WTC11 (cell line): ENCODE measurements at regions of chr12 and their contacts with region 1.

Region 1: GRCh38 chr12:93306636-93307035 is 71.1 kb upstream of the NUDT4 start:
- DNase-seq: no peak
- ATAC-seq: no peak
- H3K4me3 Mint-ChIP-seq: no peak overlapping the region
- H3K27ac Mint-ChIP-seq: no peak overlapping the region
- H3K4me1 Mint-ChIP-seq: no peaks in the 10 kb centered on the region
- H3K27me3 Mint-ChIP-seq: no peaks in the 10 kb centered on the region; the same call in 1 of the 2 replicates
- CTCF ChIP-seq: no peak

Region 2: DNA sequence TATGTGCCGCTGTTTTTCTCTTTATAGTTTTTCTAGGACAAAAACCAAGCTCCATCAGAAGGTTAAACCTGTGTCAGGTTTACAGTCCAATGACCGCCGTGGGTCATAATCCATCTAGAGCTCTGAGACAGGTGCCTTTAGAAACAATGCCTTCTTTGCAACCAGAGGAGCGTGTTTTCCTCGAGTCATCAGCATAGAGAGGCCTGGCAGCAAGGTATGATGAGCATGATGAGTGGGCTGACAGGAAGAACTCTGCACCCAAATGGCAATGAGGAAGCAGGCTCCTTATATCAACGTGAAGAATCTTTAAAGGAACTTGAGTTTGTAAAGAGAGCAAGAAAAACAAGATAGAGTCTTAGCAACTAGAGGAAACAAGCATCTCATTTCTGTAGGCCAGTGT is 10.6 kb after region 1 on chr12:
- CTCF ChIA-PET with region 1: no interaction called
- POLR2A ChIA-PET with region 1: interaction called, 14 read pairs
- DNase-seq: no peak
- ATAC-seq: no peak
- H3K4me3 Mint-ChIP-seq: no peak overlapping the region
- H3K27ac Mint-ChIP-seq: no peak overlapping the region
- H3K4me1 Mint-ChIP-seq: 0 out of 2 replicates have a peak, but pooled peaks cover 4% of the 10 kb centered on the region
- H3K27me3 Mint-ChIP-seq: no peaks in the 10 kb centered on the region
- CTCF ChIP-seq: no peak

Region 3: DNA sequence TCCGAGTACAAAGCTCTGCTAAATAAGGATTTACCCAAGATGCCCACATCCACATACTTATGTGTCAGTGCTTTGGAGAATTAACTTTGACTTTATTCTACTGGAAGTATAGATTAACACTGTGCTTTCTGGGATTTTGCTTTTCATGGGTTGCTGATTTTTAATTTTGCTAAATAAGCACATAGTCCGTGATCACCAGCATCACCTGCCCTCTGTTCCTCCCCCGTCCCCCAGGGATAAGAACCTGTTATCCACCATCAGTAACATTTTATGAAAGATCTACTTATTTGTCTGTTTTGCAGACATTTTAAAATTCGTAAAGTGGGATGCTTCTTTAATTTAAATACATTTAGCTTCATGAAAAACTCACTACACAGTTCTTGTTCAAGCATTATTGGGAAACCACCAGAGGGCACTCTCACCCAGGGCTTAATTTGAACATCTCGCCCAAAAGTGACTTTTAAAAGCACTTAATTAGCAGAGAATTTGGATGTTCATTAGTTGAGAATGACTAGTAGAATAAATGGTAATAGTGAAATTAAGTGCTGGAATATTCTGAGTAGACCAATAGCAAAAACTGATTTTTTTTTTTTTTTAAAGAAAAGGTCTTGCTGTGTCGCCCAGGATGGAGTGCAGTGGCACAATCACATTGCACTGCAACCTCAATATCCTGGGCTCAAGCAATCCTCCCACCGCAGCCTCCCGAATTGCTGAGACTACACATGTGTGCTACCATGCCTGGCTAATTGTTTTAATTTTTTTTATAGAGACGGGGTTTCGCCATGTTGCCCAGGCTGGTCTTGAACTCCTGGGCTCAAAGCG is 196.4 kb after region 1 on chr12:
- CTCF ChIA-PET with region 1: no interaction called
- POLR2A ChIA-PET with region 1: no interaction called
- DNase-seq: peak; percentile 45
- ATAC-seq: no peak
- H3K4me3 Mint-ChIP-seq: no peak overlapping the region
- H3K27ac Mint-ChIP-seq: no peak overlapping the region
- H3K4me1 Mint-ChIP-seq: no peaks in the 10 kb centered on the region
- H3K27me3 Mint-ChIP-seq: no peaks in the 10 kb centered on the region
- CTCF ChIP-seq: peak; percentile 57